ENCODE measurements at regions of chr10 and their contacts with region 1.

Region 1: DNA sequence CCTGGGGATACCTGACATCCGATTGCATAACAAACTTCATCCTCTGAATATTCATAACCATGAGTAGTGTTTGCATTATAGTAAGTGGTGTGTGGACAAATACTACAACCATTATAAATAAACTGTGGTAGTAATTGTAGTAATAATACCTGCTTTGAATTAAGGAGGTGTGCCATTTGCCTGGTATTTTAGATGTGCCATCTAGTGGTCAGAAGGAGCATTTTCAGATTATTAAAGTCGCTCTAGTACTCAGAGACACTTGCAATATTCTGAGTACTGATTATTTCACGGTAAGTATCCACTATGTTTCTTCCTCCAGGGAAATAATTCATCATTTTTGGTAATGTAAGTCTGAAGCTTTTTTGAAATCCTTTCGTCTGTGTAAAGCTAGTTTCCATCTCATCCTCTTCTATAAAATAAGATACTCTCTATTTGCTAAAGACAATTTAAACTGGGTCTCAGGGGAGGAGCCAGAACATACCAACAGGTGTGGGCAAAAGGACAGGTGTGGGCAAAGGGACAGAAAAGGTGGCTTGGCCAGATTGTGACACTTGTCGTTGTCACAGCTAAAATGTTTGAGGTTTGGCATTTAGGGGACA is 115.3 kb upstream of the WDR11 start:
- DNase-seq: peak; percentile 5
- ATAC-seq: peak; percentile 60
- H3K4me3 ChIP-seq: no peak overlapping the region
- H3K27ac ChIP-seq: no peak overlapping the region
- H3K4me1 ChIP-seq: peaks cover under 1% of the 10 kb centered on the region; the same call in 1 of the 2 replicates
- H3K27me3 ChIP-seq: peaks cover 0 to 2% of the 10 kb centered on the region in 2 experiments; a peak in 1 of 5 replicates
- CTCF ChIP-seq: peak; percentile 54
- EP300 ChIP-seq: no peak
- POLR2A ChIP-seq: no peak
- RAD21 ChIP-seq: no peak

Region 2: GRCh38 chr10:120423431-120424197 is 312.3 kb before region 1 on chr10:
- CTCF ChIA-PET with region 1: interaction called, 10 read pairs
- POLR2A ChIA-PET with region 1: no interaction called
- in situ Hi-C with region 1: loop called (anchors 10 kb)
- intact Hi-C with region 1: no loop called
- DNase-seq: peak; percentile 29
- ATAC-seq: peak; percentile 74
- H3K4me3 ChIP-seq: no peak overlapping the region
- H3K27ac ChIP-seq: no peak overlapping the region
- H3K4me1 ChIP-seq: no peaks in the 10 kb centered on the region
- H3K27me3 ChIP-seq: no peaks in the 10 kb centered on the region
- CTCF ChIP-seq: peak; percentile 79
- EP300 ChIP-seq: no peak
- POLR2A ChIP-seq: no peak
- RAD21 ChIP-seq: peak; percentile 22; the same call in 1 of the 2 replicates

Measured in HepG2 (cell line).